Heart right ventricle (tissue), 16 donors: ENCODE measurements at regions of chr3 and their contacts with region 1.

Region 1: DNA sequence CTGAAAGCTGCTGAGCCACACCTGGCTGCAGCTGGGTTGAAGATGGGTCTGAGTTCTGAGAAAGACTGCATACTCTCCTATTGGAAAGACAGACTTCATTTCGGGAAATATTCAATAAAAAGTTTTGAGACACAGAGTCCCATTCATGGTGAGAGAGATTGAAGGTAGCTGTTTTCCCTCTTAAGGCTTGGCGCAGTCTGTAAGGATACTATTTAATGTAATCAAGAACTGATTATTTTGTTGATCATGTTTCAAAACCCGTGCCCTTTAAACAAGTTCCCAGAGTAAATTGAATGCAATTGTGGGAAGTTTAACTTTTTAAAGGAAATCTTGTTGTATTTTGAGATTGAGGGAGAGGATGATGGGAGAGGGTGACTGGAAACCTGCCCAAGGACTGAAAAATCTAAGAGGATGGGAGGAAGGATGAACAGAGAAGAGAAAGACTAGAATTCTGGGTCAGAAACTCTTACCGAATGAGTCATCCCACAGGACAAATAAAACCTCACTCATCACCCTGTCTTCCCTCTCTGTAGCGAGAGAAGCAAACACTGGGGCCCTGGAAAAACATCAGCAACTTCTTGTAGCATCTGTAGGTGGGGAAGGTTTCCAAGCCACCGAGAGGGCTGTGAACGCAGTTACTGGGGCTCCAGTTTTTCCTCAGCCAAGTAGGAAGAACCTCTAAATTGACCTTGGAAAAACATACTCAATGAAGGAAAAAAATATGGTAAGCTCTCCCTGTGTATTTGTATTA is 193.2 kb upstream of the TPRG1 start:
- DNase-seq: peak in 1 of 2 donors; percentile 51
- ATAC-seq: peak in 6 of 8 donors; percentile 58 to 75 (median 70)
- H3K4me3 ChIP-seq: no peak overlapping the region
- H3K27ac ChIP-seq: peak overlapping the region in 8 of 10 donors; percentile 0 to 68 (median 50)
- H3K4me1 ChIP-seq: peaks cover 0 to 25% (median 3%) of the 10 kb centered on the region in 9 donors
- H3K27me3 ChIP-seq: no peaks in the 10 kb centered on the region
- CTCF ChIP-seq: no peak

Region 2: DNA sequence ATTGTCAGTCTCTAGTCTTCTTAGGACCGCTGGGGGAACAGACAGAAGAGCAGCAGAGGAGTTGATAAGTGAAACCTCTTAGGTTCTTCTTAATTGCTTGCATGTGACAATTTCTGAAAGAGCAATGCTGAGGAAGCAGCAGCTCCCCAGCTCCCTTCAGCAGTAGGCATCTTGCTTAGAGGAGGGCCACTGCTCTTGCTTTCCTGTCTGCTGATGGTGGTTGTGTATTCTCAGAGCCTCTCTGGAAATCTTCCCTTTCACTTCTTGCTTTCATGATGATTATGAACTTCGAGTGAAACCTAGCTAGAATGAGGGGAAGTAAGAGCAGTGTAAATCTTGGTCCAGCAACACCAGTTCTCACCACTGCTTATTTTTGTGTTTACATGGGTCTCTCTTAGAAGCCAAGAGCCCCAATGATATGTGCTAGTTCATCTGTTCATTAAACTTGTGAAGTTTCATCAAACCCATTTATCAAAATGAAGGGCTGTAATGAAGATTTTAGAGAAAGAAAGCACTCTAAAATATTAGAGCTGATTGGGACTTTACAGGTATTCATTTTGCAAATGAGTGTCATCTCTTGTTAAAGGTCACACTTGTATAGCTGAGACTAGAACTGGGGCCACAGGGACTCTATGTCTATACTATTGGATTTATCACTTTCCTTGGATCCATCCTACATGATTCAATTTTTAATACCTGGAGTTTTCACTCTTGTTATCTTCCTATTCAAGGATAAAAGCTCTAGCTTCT is 577.9 kb before region 1 on chr3:
- intact Hi-C with region 1: no loop called
- DNase-seq: no peak
- ATAC-seq: peak in 2 of 8 donors; percentile 21 to 39
- H3K4me3 ChIP-seq: no peak overlapping the region
- H3K27ac ChIP-seq: peak overlapping the region in 2 of 10 donors; percentile 16 to 57
- H3K4me1 ChIP-seq: peaks cover 2 to 69% (median 36%) of the 10 kb centered on the region in 9 donors
- H3K27me3 ChIP-seq: no peaks in the 10 kb centered on the region
- CTCF ChIP-seq: no peak

Region 3: DNA sequence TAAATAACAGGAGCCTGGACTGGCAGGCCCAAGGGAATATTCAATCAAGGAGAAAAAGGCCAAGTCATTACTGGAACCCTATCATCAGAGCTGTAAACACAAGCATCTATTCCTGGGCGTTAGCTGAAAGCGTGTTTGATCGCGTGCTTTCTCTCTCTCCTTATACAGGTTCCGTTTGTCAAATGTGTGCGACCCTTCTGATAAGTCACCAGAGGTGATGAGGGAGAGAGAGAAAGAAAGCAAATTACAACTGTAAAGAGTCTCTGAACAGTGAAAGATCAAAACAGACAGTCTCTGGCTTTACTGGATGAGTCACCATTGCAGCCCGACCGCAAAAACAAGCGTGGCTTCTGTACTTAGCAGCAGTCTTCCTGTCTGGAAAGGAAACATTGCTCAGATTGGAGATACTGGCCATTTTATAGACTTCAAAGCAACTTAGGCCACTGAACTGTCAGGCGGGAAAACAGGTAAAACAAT is 153.7 kb after region 1 on chr3:
- intact Hi-C with region 1: loop called in 3 of 10 experiments (anchors 10 kb)
- DNase-seq: peak; percentile 30 to 31
- ATAC-seq: peak; percentile 17 to 89 (median 70)
- H3K4me3 ChIP-seq: no peak overlapping the region
- H3K27ac ChIP-seq: peak overlapping the region in 9 of 10 donors; percentile 6 to 82 (median 42)
- H3K4me1 ChIP-seq: peaks cover 0 to 27% (median 9%) of the 10 kb centered on the region in 9 donors
- H3K27me3 ChIP-seq: no peaks in the 10 kb centered on the region
- CTCF ChIP-seq: no peak

Region 4: GRCh38 chr3:189233225-189233858 is 254.7 kb after region 1 on chr3:
- intact Hi-C with region 1: loop called in 1 of 10 experiments (anchors 10 kb)
- DNase-seq: peak; percentile 14 to 54
- ATAC-seq: peak in 7 of 8 donors; percentile 74 to 89 (median 80)
- H3K4me3 ChIP-seq: no peak overlapping the region
- H3K27ac ChIP-seq: no peak overlapping the region
- H3K4me1 ChIP-seq: peaks cover 0 to 7% (median 0%) of the 10 kb centered on the region in 9 donors
- H3K27me3 ChIP-seq: no peaks in the 10 kb centered on the region
- CTCF ChIP-seq: peak; percentile 24 to 78 (median 61)